Common myeloid progenitor, CD34-positive (primary cell): ENCODE measurements at regions of chr14 and their contacts with region 1.

Region 1: DNA sequence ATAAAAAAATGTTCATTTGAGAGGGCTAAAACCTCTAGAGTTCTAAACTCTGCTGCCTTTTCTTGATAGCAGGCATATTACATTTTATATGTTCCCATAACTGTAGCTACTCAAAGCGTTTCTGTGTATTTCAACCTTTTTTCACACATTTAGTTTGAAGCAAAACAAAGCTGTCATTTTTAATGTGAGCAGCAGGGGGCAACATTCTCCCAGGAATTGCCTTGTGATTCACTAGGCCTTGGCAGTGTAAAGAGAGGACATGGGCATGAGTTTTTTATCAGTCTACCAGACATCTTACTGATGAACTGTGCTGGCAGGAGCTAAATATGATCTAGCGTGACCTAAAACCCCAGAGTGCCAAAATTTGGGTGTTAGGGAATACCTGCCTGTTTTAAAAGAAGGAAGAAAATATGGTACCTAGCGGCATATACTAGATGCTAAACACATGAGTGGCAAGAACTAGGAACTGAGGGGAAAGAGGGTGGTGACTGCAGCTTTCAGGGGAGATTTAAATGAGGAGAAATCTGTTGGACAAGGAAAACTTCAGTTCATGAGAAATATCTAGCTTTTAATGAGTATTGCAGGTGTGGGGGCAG is 65.3 kb downstream of the IFT43 start:
- DNase-seq: peak; percentile 63 to 82 (median 68)
- H3K4me3 ChIP-seq: no peak overlapping the region
- H3K27ac ChIP-seq: no peak overlapping the region
- H3K4me1 ChIP-seq: peaks cover 0 to 9% (median 8%) of the 10 kb centered on the region in 4 experiments
- H3K27me3 ChIP-seq: no peaks in the 10 kb centered on the region

Region 2: GRCh38 chr14:75884198-75884611 is 166.7 kb before region 1 on chr14:
- CTCF ChIA-PET with region 1: no interaction called
- POLR2A ChIA-PET with region 1: no interaction called
- DNase-seq: no peak
- H3K4me3 ChIP-seq: no peak overlapping the region
- H3K27ac ChIP-seq: no peak overlapping the region
- H3K4me1 ChIP-seq: no peaks in the 10 kb centered on the region
- H3K27me3 ChIP-seq: no peaks in the 10 kb centered on the region

Region 3: DNA sequence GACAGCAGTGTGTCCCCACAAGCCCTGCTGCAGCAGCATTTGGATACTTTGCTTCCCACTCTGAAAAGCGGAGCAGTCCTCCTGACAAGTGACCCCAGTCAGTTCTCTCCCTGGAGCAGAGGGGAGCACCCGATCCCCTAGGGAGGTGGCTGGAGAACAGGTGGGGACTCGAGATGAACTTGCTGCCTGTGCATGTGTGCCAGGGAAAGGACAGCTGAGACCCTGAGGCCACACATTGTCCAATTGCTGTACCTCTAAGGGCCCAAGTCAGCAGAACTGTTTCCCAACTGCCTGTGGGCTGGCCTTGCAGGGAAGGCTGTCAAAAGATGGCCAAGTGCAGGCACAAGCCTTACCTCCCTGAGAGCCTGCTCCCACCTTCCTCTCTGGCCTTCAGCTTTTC is 10.2 kb before region 1 on chr14:
- CTCF ChIA-PET with region 1: interaction called, 16 read pairs
- POLR2A ChIA-PET with region 1: no interaction called
- DNase-seq: no peak
- H3K4me3 ChIP-seq: no peak overlapping the region
- H3K27ac ChIP-seq: no peak overlapping the region
- H3K4me1 ChIP-seq: no peaks in the 10 kb centered on the region
- H3K27me3 ChIP-seq: no peaks in the 10 kb centered on the region

Region 4: DNA sequence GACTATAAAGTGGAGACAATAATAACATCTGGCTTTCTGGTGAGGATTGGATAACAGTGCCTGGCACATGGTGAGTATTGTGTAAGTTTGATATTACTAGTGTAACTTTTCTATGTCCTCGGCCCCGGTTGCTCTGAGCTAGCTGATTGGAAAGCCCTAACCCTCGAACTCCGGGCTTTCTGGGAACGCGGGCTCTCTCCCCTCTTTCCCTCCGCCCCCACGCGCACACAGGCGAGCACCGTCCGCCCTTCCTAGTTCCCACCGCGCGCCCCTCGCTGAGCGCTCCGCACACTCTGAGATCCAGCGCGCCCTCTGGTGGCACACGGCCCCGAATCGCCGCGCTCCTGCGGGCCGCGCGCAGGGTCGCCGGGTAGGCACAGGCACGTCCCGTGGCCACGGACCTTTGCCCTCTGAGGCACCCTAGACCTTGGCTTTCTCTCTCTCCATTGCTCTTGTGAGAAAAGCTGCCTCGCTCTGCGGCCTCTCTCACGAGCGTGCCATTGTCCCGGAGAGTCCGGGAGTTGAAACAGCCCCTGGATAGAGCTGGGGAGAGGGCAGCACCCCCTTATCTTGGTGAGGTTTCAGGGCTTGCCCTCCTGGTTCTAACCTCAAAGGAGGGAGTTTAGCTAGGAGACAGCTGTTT is 301.9 kb after region 1 on chr14:
- CTCF ChIA-PET with region 1: interaction called, 57 read pairs
- POLR2A ChIA-PET with region 1: no interaction called
- DNase-seq: peak; percentile 54 to 69 (median 68)
- H3K4me3 ChIP-seq: peak overlapping the region in 3 of 7 experiments; percentile 21 to 57 (median 43)
- H3K27ac ChIP-seq: no peak overlapping the region
- H3K4me1 ChIP-seq: peaks cover 0 to 4% (median 1%) of the 10 kb centered on the region in 4 experiments
- H3K27me3 ChIP-seq: peaks cover 0 to 65% (median 13%) of the 10 kb centered on the region in 5 experiments

Region 5: DNA sequence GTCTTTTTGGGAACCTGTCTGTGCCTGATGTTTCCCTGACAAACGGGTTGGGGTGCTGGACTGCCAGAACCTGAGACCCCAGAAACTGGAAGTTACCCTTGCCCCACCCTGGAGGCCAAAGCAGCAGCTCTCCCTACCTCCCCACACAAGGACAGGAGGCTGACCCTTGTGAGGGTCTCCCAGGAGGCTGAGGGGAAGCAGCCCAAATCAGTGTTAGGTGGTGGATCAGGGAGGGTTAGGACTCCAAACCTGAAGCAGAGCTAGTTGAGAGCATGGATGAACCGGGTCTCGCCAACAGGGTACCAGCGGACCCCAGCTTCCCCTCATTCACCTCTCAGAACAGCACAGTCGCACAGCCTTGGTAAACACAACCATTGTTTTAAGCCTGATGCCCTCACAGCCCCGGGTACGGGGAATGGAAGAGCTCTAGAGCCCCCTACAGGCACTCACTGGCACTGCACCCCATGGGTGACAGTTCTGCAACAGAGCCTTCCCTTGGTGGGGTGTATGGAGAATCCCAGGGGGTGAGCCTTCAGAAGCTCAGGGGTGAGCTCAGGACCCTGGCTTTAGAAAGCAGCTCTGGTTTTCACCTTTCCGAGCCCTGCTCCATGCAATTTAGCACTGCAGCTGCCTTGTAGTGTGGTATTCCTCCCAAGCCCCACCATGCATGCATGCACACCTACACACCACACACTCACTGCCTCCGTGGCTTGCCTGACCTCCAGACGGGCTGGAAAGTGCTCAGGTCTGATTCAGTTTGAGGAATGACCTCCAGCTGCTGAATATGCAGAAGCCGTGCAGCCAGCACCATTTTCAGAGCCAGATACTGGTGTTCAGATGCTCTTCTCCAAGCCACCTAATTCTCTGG is 336.3 kb after region 1 on chr14:
- CTCF ChIA-PET with region 1: interaction called, 16 read pairs
- POLR2A ChIA-PET with region 1: no interaction called
- DNase-seq: peak; percentile 48 to 78 (median 67)
- H3K4me3 ChIP-seq: no peak overlapping the region
- H3K27ac ChIP-seq: no peak overlapping the region
- H3K4me1 ChIP-seq: no peaks in the 10 kb centered on the region
- H3K27me3 ChIP-seq: peaks cover 13 to 53% (median 39%) of the 10 kb centered on the region in 5 experiments